Activated CD4-positive, alpha-beta T cell treated with anti-CD3 and anti-CD28 coated beads for 36 hours (primary cell): ENCODE measurements at regions of chr17 and their contacts with region 1.

Region 1: GRCh38 chr17:49180303-49180702 is 30.1 kb downstream of the GNGT2 start:
- DNase-seq: peak; percentile 80
- ATAC-seq: peak; percentile 58
- H3K4me3 Mint-ChIP-seq: no peak overlapping the region
- H3K27ac Mint-ChIP-seq: no peak overlapping the region
- H3K4me1 Mint-ChIP-seq: peaks cover 4% of the 10 kb centered on the region
- H3K27me3 Mint-ChIP-seq: peaks cover 1% of the 10 kb centered on the region

Region 2: GRCh38 chr17:49210158-49211029 is 30.1 kb after region 1 on chr17 and contains the starts of genes ABI3 and GNGT2:
- CTCF ChIA-PET with region 1: interaction called, 12 read pairs
- POLR2A ChIA-PET with region 1: no interaction called
- intact Hi-C with region 1: no loop called
- DNase-seq: peak; percentile 84
- ATAC-seq: peak; percentile 92
- H3K4me3 Mint-ChIP-seq: peak within 1 kb of the TSS; percentile 86
- H3K27ac Mint-ChIP-seq: peak within 1 kb of the TSS; percentile 97
- H3K4me1 Mint-ChIP-seq: peaks cover 62% of the 10 kb centered on the region
- H3K27me3 Mint-ChIP-seq: no peaks in the 10 kb centered on the region
- total RNA-seq, gene ABI3: 27.8 to 31.1 TPM
- total RNA-seq, gene GNGT2: 27.3 to 27.7 TPM

Region 3: GRCh38 chr17:49277638-49278037 is 97.3 kb after region 1 on chr17:
- CTCF ChIA-PET with region 1: interaction called, 3 read pairs
- POLR2A ChIA-PET with region 1: no interaction called
- intact Hi-C with region 1: loop called in 1 of 2 experiments (anchors 1 kb)
- DNase-seq: no peak
- ATAC-seq: no peak
- H3K4me3 Mint-ChIP-seq: no peak overlapping the region
- H3K27ac Mint-ChIP-seq: no peak overlapping the region
- H3K4me1 Mint-ChIP-seq: no peaks in the 10 kb centered on the region
- H3K27me3 Mint-ChIP-seq: no peaks in the 10 kb centered on the region

Region 4: DNA sequence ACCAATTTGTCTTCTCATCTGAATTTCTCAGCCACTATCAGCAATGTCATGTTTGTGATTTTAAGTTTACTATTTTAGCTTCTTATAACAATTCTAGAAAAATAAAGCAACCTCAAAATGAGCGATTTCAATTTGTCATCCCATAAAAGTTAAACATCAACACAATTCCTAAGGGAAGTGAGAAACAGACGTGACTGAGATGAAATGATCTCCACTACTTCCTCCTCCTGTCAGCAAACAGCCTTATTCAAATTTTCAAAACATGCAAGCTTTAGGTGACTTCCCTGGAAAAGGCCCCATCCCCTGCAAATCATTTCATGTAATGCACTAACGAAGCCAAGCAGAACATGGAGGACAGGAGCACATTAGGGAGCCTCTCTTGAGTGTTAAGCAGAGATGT is 116.8 kb after region 1 on chr17:
- CTCF ChIA-PET with region 1: interaction called, 29 read pairs
- POLR2A ChIA-PET with region 1: no interaction called
- intact Hi-C with region 1: no loop called
- DNase-seq: no peak
- ATAC-seq: no peak
- H3K4me3 Mint-ChIP-seq: no peak overlapping the region
- H3K27ac Mint-ChIP-seq: no peak overlapping the region
- H3K4me1 Mint-ChIP-seq: peaks cover 6% of the 10 kb centered on the region
- H3K27me3 Mint-ChIP-seq: no peaks in the 10 kb centered on the region

Region 5: DNA sequence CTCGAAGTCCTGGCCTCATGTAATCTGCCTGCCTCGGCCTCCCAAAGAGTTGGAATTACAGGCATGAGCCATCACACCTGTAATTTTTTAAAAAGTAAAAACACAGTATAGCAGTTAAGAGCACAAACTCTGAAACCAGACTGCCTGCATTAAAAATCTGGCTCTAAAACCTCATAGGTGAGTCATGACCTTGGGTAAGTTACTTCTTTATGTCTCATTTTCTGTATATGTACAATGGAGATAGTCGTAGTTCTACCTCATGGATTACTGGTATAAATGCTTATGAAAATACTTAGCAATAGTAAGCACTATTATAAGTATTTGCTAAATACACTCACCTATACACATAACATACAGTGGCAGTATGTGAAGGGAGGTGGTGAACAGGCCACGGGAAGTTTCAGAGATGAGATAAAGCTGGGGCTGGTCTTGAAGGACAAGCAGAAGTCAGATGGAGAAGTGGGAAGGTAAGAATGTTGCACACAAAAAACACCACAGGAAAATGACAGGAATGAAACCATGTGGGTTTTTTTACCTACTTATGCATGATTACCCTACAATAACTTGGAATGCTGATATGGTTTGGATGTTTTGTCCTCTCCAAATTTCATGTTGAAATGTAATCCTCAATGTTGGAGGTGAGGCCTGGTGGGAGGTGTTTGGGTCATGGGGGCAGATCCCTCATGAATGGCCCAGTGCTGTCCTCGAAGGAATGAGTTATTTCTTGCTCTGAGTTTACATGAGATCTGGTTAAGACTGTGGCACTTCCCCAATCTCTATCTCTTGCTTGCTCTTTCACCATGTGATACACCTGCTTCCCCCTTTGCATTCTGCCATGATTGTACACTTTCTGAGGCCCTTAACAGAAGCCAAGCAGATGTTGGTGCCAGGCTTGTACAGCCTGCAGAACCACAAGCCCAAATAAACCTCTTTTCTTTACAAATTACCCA is 147.8 kb after region 1 on chr17:
- CTCF ChIA-PET with region 1: no interaction called
- POLR2A ChIA-PET with region 1: no interaction called
- intact Hi-C with region 1: no loop called
- DNase-seq: peak; percentile 19
- ATAC-seq: peak; percentile 92
- H3K4me3 Mint-ChIP-seq: no peak overlapping the region
- H3K27ac Mint-ChIP-seq: peak overlapping the region; percentile 67
- H3K4me1 Mint-ChIP-seq: peaks cover 44% of the 10 kb centered on the region
- H3K27me3 Mint-ChIP-seq: no peaks in the 10 kb centered on the region